GM13977 (cell line): ENCODE measurements at regions of chr3 and their contacts with region 1.

Region 1: GRCh38 chr3:67357610-67358458 is 296.6 kb downstream of the SUCLG2 start:
- DNase-seq: peak; percentile 24
- CTCF ChIP-seq: peak; percentile 64

Region 2: DNA sequence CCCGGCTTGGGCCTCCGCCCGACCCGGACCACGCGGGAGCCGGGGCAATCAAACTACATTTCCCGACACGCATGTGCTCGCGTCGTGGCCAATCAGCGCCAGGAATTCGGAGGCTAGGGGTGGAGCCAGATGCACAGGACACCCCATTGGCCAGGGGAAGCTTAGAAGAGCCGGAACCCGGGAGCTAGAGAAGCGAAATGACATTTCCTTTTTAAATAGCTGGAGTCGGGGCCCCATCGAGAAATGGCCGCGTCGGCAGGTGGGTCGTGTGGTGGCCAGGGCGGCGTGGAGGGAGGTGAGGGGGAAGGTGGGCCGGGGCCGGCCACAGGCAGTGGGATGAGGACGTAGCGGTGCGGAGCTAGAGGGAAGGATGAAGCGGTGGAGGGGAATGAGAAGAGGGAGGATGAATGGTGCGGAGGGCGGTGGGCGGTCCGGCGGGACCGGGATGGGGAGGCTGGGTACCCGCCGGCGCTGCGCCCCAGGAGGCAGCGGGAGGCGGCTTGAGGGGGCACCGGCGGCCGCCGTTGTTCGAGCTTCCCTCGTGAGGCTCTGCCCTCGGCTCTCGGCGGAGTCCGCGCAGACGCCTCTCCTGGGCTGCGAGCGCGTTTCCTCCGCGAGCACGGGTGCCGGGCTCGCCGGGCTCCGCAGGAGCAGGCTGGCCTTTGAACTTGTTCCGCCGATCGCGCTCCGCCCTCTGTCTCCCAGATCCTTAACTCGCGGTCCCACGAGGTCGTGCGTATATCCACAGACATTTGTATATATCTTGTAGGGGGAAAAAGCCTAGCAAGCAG is 359.5 kb before region 1 on chr3 and contains the start of gene KBTBD8:
- in situ Hi-C with region 1: loop called (anchors 25 kb)
- DNase-seq: peak; percentile 93
- CTCF ChIP-seq: no peak

Region 3: DNA sequence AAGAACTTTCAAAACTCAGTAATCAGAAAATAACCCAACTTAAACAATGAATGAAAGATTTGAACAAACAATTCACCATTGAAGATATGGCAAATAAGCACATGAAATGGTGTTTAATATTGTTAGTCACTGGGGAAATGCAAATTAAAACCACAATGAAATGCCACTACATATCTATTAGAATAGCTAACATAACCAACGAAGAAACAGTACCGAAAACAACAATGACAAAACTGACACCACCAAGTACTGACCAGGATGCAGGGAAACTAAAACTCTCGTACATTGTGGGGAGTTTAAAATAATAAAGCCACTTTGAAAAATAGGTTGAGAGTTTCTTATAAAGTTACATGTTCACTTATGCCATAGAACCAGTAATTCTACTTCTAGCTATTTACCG is 290.6 kb before region 1 on chr3:
- in situ Hi-C with region 1: no loop called
- DNase-seq: no peak
- CTCF ChIP-seq: no peak

Region 4: GRCh38 chr3:67113802-67114407 is 243.9 kb before region 1 on chr3:
- in situ Hi-C with region 1: loop called (anchors 25 kb)
- DNase-seq: peak; percentile 46
- CTCF ChIP-seq: peak; percentile 99

Region 5: DNA sequence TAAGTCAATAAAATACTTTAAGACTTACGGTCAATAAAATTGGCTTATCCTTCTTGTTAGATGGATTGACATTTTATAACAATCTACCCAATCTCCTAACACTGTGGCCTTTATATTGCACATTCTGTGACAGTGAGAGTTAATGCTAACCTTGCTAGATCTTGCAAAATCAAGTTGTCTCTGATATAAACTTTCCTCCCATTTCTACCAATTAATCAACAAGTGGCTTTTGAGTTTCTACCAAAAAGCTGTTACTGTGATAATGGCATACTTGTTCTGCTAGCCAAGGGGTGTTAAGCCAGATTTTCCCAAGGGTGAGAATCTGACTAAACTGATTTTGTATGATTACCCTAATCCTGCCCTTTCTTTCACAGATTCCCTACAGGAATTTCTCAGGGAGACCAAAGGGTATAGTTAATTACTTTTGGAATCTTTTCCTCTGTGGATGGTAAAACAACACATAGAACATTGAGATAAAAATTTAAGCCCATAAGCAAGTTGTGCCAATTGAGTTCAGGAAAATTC is 470.7 kb after region 1 on chr3:
- in situ Hi-C with region 1: no loop called
- DNase-seq: no peak
- CTCF ChIP-seq: no peak